Ascending aorta (tissue), 2 donors: ENCODE measurements at regions of chr10 and their contacts with region 1.

Region 1: GRCh38 chr10:92074126-92074887 is 150.7 kb downstream of the BTAF1 start:
- DNase-seq: no peak
- H3K4me3 ChIP-seq: no peak overlapping the region
- H3K27ac ChIP-seq: no peak overlapping the region
- H3K4me1 ChIP-seq: no peaks in the 10 kb centered on the region
- H3K27me3 ChIP-seq: no peaks in the 10 kb centered on the region
- CTCF ChIP-seq: peak in 1 of 3 experiments; percentile 19

Region 2: GRCh38 chr10:91788220-91788924 is 285.9 kb before region 1 on chr10:
- intact Hi-C with region 1: no loop called
- DNase-seq: no peak
- H3K4me3 ChIP-seq: no peak overlapping the region
- H3K27ac ChIP-seq: no peak overlapping the region
- H3K4me1 ChIP-seq: no peaks in the 10 kb centered on the region
- H3K27me3 ChIP-seq: no peaks in the 10 kb centered on the region
- CTCF ChIP-seq: no peak

Region 3: GRCh38 chr10:91944880-91945630 is 129.3 kb before region 1 on chr10:
- intact Hi-C with region 1: no loop called
- DNase-seq: no peak
- H3K4me3 ChIP-seq: no peak overlapping the region
- H3K27ac ChIP-seq: no peak overlapping the region
- H3K4me1 ChIP-seq: no peaks in the 10 kb centered on the region
- H3K27me3 ChIP-seq: no peaks in the 10 kb centered on the region
- CTCF ChIP-seq: no peak

Region 4: DNA sequence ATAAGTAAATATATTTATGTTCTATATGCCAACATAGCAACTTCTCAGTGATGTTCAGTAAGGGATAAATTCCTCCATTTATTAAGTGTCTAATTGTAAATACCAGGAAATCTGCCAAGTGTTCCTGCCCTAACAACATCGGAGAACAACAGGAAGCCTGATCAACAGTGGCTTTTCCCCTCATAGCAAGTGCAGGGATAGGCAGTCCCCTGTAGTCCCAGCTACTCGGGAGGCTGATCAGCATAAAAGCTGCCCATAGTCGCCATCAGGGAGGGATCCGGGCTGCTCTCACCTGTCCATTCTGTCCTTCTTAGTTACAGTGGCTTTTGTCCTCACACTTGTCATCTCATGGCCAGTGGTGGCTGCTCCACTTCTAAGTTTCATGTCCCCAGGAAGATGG is 358.3 kb after region 1 on chr10:
- intact Hi-C with region 1: loop called (anchors 5 kb)
- DNase-seq: no peak
- H3K4me3 ChIP-seq: no peak overlapping the region
- H3K27ac ChIP-seq: no peak overlapping the region
- H3K4me1 ChIP-seq: no peaks in the 10 kb centered on the region
- H3K27me3 ChIP-seq: no peaks in the 10 kb centered on the region
- CTCF ChIP-seq: no peak